Aorta (tissue), 5 donors: ENCODE measurements at regions of chr2 and their contacts with region 1.

Region 1: GRCh38 chr2:152054593-152054992 is 44.3 kb downstream of the CACNB4 start:
- DNase-seq: no peak
- ATAC-seq: peak; percentile 22
- H3K4me3 ChIP-seq: no peak overlapping the region
- H3K27ac ChIP-seq: no peak overlapping the region
- H3K4me1 ChIP-seq: peaks cover 0 to 1% of the 10 kb centered on the region in 2 donors
- H3K27me3 ChIP-seq: no peaks in the 10 kb centered on the region

Region 2: DNA sequence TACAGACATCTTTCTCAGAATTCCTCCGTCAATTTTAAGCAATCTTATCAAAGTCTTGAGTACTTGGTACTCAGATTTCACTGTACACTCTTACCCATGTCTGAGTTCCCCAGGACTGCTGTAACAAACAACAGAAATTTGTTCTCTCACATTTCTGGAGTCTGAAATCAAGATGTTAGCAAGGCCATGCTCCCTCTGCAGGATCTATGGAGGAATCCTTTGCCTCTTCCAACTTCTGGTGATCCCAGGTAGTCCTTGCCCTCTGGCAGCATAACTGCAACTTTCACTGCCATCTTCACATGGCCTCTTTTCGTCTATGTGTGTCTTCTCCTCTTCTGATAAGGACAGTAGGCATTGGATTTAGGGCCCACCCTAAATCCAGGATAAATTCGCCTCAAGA is 61.4 kb after region 1 on chr2:
- intact Hi-C with region 1: loop called (anchors 10 kb)
- DNase-seq: no peak
- ATAC-seq: no peak
- H3K4me3 ChIP-seq: no peak overlapping the region
- H3K27ac ChIP-seq: no peak overlapping the region
- H3K4me1 ChIP-seq: no peaks in the 10 kb centered on the region
- H3K27me3 ChIP-seq: no peaks in the 10 kb centered on the region